Caco-2 (cell line): ENCODE measurements at regions of chr14 and their contacts with region 1.

Region 1: DNA sequence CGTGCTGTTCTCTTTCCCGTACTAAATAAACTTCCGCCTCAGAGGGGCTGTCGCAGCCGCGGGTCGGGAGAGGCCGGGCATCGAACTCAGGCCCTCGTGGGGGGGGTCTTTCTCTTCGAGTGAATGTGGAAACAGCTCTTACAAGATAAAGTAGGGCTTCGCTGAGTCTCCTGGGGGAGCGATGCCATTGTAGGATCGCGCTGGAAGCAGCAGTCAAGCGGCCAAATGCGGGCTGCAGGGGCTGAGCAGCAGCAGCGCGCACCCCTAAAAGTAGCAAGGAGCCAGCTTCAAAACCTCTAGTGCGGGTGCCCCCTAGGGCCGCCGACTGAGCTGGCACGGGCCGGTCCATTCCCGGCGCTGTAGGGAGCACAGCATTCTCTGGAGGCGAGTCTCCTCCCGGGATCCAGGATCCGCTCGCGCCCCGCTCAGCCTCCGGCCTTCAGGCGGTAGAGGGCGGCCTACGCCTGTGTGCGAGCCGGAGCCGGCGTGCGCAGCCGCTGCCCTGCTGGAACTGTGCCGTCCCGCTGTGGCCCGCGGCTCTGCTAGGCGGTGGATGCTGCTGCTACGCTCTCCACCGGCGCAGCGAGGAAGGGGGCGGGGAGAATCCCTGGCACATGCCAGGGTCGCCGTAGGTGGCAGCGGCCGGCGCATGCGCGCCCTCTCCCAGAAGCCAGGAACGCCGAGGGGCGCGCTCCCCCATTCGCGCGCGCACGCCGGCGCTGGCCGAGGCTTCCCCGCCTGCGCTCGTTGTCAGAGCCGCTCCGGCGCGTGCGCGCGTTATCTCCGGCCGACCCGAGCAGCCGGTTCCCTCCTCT is at the start of gene FUT8:
- DNase-seq: peak; percentile 92 to 93
- H3K4me3 ChIP-seq: peak within 1 kb of the TSS; percentile 72
- H3K4me3 Mint-ChIP-seq: peak within 1 kb of the TSS; percentile 84
- H3K27ac Mint-ChIP-seq: peak within 1 kb of the TSS; percentile 86
- H3K4me1 ChIP-seq: peaks cover 11% of the 10 kb centered on the region
- H3K4me1 Mint-ChIP-seq: no peaks in the 10 kb centered on the region
- H3K27me3 ChIP-seq: no peaks in the 10 kb centered on the region
- H3K27me3 Mint-ChIP-seq: no peaks in the 10 kb centered on the region
- CTCF ChIP-seq: peak; percentile 42 to 58
- total RNA-seq, gene FUT8: 63.0 and 67.1 TPM in 2 replicates

Region 2: DNA sequence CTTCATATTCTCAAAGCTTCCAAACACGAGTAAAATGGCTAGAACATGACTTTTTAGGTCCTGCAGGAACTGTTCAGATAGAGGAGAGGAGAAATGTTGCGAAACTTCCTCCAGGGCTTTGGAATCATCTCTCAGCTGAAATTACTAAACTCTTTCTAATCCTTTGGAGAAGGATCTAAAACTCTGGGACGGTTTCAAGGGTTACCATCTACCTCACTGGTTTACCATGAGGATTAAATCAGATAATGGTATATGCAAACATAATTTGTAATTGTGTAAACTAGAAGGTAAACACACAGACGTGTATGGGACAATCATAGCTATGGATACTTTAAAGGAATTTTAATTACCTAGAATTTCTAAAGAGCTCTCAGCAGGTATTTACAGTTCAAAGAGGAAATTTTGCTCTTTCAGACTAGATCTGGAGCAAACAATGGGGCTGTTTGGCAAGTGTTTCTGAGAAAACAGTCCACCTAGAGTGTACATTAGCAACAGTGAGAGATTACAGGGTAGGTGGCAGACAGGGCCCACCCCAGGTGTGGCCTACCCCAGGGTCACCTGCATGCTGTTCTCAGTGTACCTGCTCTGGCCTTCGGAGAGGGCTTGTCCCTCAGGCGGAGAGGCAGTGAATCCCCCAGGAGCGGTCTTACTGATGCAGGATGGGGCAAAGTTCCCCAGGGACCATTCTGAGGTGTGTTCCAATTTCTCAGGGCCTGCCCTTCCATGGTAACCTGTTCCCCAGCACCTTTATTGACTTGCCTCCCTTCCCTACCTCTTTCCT is 185.2 kb before region 1 on chr14:
- CTCF ChIA-PET with region 1: interaction called, 13 read pairs
- POLR2A ChIA-PET with region 1: interaction called, 12 read pairs
- intact Hi-C with region 1: loop called (anchors 1 kb)
- DNase-seq: peak; percentile 93 to 97
- H3K4me3 ChIP-seq: no peak overlapping the region
- H3K4me3 Mint-ChIP-seq: peak overlapping the region; percentile 59
- H3K27ac Mint-ChIP-seq: peak overlapping the region; percentile 97
- H3K4me1 ChIP-seq: peaks cover 81% of the 10 kb centered on the region
- H3K4me1 Mint-ChIP-seq: peaks cover 55% of the 10 kb centered on the region
- H3K27me3 ChIP-seq: no peaks in the 10 kb centered on the region
- H3K27me3 Mint-ChIP-seq: no peaks in the 10 kb centered on the region
- CTCF ChIP-seq: no peak

Region 3: DNA sequence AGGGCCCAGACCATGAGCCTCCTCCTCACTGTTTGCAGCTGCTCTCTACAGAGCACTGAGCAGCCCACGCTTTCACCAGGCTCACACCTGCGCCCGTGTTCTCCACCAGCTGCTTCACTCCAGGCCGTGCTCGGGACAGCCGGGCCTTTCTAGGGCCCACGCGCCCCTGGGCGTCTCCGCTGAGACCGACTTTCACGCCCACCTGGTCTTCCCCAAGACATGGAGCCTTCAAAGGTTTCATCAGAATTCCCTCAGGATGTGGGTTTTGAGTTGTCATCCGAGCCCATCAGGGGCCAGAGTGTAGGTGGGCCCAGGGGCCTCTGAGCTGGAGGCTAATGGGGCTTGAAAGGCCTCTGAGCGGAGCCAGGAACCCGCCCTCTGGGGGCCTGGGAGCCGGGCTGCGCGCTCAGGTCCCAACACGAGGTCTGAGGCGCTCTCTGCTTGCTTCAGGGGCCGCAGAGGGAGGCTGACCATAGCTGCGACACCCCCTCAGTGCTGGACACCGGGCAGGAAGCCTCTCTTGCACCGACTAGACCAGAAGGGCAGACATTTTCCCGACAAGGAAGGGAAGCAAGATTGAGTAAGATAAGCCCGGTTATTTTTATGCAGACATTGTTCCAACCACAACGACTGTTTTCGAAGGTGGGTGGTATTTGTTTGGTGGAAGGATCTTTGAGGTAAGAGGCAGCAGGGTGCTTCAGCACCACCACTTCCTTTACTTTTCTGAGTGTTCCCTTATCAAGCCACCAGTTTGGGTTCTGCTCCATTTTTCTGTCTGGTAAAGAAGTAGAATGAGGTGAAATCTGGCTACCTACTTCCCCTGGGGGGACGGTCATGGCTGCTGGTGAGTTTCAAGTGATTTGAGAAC is 124.7 kb before region 1 on chr14:
- CTCF ChIA-PET with region 1: interaction called, 28 read pairs
- POLR2A ChIA-PET with region 1: interaction called, 4 read pairs
- intact Hi-C with region 1: loop called (anchors 5 kb)
- DNase-seq: no peak
- H3K4me3 ChIP-seq: no peak overlapping the region
- H3K4me3 Mint-ChIP-seq: no peak overlapping the region
- H3K27ac Mint-ChIP-seq: no peak overlapping the region
- H3K4me1 ChIP-seq: peaks cover 7% of the 10 kb centered on the region; the same call in 1 of the 2 replicates
- H3K4me1 Mint-ChIP-seq: peaks cover 16% of the 10 kb centered on the region
- H3K27me3 ChIP-seq: no peaks in the 10 kb centered on the region
- H3K27me3 Mint-ChIP-seq: no peaks in the 10 kb centered on the region
- CTCF ChIP-seq: no peak

Region 4: DNA sequence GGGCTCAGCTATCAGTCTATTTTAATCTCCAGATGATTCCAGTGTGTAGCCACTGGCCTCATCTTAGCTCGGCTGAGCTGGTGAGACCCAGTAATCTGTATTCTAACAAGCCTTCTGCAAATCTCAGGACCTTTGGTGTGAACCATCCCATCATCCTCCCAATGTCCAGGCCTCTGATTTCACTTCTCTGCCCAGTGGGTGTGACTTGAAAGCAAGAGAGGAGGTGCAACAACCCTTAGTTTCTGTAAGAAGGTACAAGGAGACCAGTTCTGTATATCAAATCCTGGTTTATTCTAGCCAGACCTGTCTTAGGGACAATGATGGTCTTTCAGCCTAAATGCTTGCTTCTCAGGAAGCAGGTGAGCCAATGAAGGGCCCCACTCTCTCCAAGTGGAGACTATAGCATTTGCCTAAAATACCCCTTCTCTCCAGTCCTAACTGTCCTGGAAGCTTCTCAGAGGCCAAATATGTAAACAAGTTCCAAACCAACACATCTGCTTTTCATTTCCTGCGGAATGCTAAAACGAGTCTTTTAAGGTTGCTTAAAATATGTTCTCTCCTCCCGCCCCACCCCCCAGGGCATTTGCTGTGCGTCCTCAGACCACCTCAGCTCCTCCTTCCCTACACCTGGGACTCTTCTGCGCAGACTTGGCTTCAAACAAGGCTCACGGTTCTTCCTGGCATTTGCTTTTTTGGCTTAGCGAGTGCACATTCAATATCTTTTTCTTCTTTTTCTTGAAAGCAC is 78.1 kb before region 1 on chr14:
- CTCF ChIA-PET with region 1: interaction called, 4 read pairs
- POLR2A ChIA-PET with region 1: interaction called, 6 read pairs
- intact Hi-C with region 1: loop called (anchors 1 kb)
- DNase-seq: peak; percentile 60 to 78
- H3K4me3 ChIP-seq: no peak overlapping the region
- H3K4me3 Mint-ChIP-seq: peak overlapping the region; percentile 63
- H3K27ac Mint-ChIP-seq: peak overlapping the region; percentile 96
- H3K4me1 ChIP-seq: peaks cover 96% of the 10 kb centered on the region
- H3K4me1 Mint-ChIP-seq: peaks cover 52% of the 10 kb centered on the region
- H3K27me3 ChIP-seq: no peaks in the 10 kb centered on the region
- H3K27me3 Mint-ChIP-seq: no peaks in the 10 kb centered on the region
- CTCF ChIP-seq: no peak

Region 5: DNA sequence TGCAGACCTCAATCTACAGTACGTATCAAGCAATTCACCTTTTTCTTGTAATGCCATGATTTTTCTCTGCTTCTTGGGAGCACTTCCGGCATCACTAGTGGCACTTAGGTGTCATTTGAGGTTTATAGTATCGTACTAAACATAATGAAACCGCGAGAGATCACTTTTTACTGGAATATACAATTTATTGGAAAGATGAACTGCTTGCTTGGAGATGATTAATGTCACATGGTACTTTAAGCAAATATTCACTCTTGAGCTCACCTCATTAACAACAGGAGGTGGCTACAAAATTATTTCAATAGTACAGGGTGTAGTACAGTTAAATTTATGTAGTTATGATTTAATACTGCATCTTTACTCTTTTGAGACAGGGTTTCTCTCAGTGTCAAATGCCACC is 11.7 kb after region 1 on chr14:
- CTCF ChIA-PET with region 1: no interaction called
- POLR2A ChIA-PET with region 1: no interaction called
- intact Hi-C with region 1: no loop called
- DNase-seq: no peak
- H3K4me3 ChIP-seq: no peak overlapping the region
- H3K4me3 Mint-ChIP-seq: no peak overlapping the region
- H3K27ac Mint-ChIP-seq: peak overlapping the region; percentile 23
- H3K4me1 ChIP-seq: no peaks in the 10 kb centered on the region
- H3K4me1 Mint-ChIP-seq: peaks cover 12% of the 10 kb centered on the region
- H3K27me3 ChIP-seq: no peaks in the 10 kb centered on the region
- H3K27me3 Mint-ChIP-seq: no peaks in the 10 kb centered on the region
- CTCF ChIP-seq: no peak

Region 6: DNA sequence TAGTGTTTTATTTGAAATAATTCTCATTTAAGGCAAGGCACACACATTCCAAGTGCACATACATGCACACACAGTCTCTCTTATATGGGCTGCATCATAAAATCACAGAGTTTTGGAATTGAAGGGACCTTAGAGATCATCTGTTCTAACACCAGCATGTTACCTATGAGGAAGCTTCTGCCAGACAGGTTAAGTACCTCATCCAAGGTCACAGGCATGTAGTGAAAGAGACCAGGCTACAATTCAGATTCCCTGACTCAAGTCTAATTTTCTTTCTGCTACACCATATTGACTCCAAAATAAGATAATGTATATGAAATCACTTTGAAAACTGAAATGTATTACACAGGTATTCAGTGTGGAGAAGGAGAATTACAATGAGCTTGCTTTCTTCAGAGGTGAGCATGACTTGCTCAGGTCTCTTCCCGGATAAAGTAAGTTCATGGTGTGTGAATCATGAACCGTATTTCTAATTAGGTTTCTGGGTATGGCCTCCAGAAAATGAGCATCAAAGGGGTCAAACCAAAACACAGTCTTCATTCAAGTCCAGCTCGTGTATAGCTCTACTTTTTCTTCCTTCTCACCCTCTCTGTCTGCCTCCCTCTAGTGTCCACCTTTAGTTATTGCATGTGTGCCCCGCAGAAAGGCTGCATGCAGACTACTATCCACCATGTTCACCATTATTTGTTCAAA is 412.2 kb after region 1 on chr14:
- CTCF ChIA-PET with region 1: interaction called, 101 read pairs
- POLR2A ChIA-PET with region 1: interaction called, 4 read pairs
- intact Hi-C with region 1: loop called (anchors 1 kb)
- DNase-seq: peak; percentile 56 to 66
- H3K4me3 ChIP-seq: no peak overlapping the region
- H3K4me3 Mint-ChIP-seq: no peak overlapping the region
- H3K27ac Mint-ChIP-seq: no peak overlapping the region
- H3K4me1 ChIP-seq: no peaks in the 10 kb centered on the region
- H3K4me1 Mint-ChIP-seq: no peaks in the 10 kb centered on the region
- H3K27me3 ChIP-seq: peaks cover 2% of the 10 kb centered on the region; the same call in 1 of the 2 replicates
- H3K27me3 Mint-ChIP-seq: peaks cover 4% of the 10 kb centered on the region
- CTCF ChIP-seq: peak; percentile 84 to 85

Region 7: GRCh38 chr14:65958664-65959562 is 546.7 kb after region 1 on chr14:
- CTCF ChIA-PET with region 1: interaction called, 6 read pairs
- POLR2A ChIA-PET with region 1: no interaction called
- intact Hi-C with region 1: loop called (anchors 2 kb)
- DNase-seq: no peak
- H3K4me3 ChIP-seq: no peak overlapping the region
- H3K4me3 Mint-ChIP-seq: no peak overlapping the region
- H3K27ac Mint-ChIP-seq: no peak overlapping the region
- H3K4me1 ChIP-seq: no peaks in the 10 kb centered on the region
- H3K4me1 Mint-ChIP-seq: no peaks in the 10 kb centered on the region
- H3K27me3 ChIP-seq: peaks cover 2% of the 10 kb centered on the region
- H3K27me3 Mint-ChIP-seq: peaks cover 6% of the 10 kb centered on the region
- CTCF ChIP-seq: peak in 1 of 2 experiments; percentile 38